B cell (primary cell): ENCODE measurements at regions of chr1 and their contacts with region 1.

Region 1: DNA sequence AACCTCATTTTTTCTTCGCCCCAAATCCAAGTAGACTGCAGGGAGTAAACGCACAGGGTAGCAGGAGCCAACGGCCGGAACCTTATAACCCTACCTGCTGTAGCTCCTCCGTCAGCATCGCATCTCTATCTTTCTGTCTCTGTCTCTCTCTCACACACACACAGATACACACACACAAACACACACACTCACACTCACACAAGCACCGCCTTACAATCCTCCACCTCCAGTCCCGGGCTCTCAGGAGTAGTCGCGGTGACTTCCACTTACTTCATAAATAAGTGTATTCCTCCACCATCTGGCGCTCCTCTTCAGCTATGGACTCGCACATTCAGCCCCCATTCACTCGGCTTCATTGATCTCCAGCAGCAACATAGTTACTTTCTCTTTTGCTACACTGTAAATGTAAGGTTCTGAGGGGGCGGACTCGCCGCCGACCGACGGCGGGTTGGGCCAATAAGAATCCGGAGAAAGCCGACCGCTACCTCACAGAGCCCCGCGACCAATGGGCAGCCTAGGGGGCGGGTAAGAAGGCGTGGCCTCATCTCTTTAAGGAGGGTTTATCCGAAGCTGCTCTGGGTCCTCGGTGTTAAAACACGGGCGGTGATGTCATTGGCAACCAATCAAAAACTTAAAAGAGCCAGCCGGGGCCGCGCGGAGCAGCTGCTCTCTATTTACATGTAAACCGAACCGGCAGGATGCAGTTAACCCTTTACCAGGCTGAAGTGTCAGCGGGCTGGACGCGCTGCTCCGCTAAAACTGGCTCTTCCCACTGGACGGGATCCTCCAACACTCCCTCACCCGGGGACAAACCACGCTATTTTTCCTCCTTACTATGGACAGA is at the start of gene DUSP10:
- DNase-seq: peak; percentile 100
- ATAC-seq: peak; percentile 78
- H3K4me3 ChIP-seq: peak within 1 kb of the TSS; percentile 85 to 94 (median 94)
- H3K4me3 Mint-ChIP-seq: no peak within 1 kb of the TSS
- H3K27ac ChIP-seq: peak within 1 kb of the TSS; percentile 99
- H3K27ac Mint-ChIP-seq: no peak within 1 kb of the TSS
- H3K4me1 ChIP-seq: peaks cover 28 to 42% of the 10 kb centered on the region in 2 donors
- H3K4me1 Mint-ChIP-seq: peaks cover 26% of the 10 kb centered on the region
- H3K27me3 ChIP-seq: no peaks in the 10 kb centered on the region
- H3K27me3 Mint-ChIP-seq: no peaks in the 10 kb centered on the region
- CTCF ChIP-seq: no peak
- total RNA-seq, gene DUSP10: 19.8 and 22.8 TPM in 2 replicates

Region 2: GRCh38 chr1:220983877-220984635 is 757.9 kb before region 1 on chr1:
- CTCF ChIA-PET with region 1: no interaction called
- POLR2A ChIA-PET with region 1: no interaction called
- intact Hi-C with region 1: no loop called
- DNase-seq: no peak
- ATAC-seq: no peak
- H3K4me3 ChIP-seq: no peak overlapping the region
- H3K4me3 Mint-ChIP-seq: no peak overlapping the region
- H3K27ac ChIP-seq: no peak overlapping the region
- H3K27ac Mint-ChIP-seq: no peak overlapping the region
- H3K4me1 ChIP-seq: no peaks in the 10 kb centered on the region
- H3K4me1 Mint-ChIP-seq: no peaks in the 10 kb centered on the region
- H3K27me3 ChIP-seq: no peaks in the 10 kb centered on the region
- H3K27me3 Mint-ChIP-seq: no peaks in the 10 kb centered on the region
- CTCF ChIP-seq: no peak

Region 3: DNA sequence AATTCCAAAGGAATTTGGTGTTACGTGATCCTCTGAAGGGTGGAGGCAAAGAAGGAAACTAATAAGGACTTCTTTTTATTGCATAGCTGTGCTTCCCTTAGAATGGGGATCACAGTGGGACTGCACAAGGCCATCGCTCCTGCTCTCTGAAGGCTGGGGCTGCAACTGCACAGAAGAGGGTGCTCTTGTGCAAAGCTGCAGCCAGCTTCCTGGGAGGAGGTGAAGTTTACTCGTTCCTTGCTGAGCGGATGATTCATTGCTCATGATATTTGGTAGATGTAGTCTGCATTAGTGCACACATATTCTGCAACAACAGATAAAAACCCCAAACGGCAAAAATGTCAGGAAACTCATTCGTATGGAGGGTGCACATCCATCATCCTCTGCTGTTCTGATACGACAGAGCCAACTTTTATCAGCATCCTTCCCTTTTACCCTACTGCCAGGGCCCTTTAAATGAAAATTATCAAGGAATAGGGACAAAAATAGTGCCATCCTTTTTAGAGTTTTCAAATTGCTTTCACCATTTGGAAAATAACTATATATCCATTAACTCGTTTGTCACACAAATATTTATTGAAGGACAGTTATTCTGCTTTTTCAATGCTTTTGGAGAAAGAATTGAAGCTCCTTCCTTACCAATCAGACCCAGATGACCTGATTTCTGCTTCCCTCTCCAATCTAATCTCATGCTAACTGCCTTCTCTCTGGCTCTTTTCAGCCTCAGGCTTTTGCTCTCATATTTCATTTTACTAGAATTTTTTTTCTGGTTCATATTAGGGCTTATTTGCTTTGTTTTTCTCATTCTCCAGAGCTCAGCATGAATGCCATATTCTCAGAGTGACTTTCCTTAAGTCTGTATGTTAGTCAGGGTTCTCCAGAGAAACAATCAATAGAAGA is 263.6 kb before region 1 on chr1:
- CTCF ChIA-PET with region 1: interaction called, 15 read pairs
- POLR2A ChIA-PET with region 1: interaction called, 3 read pairs
- intact Hi-C with region 1: no loop called
- DNase-seq: peak; percentile 55
- ATAC-seq: peak; percentile 85
- H3K4me3 ChIP-seq: no peak overlapping the region
- H3K4me3 Mint-ChIP-seq: no peak overlapping the region
- H3K27ac ChIP-seq: no peak overlapping the region
- H3K27ac Mint-ChIP-seq: no peak overlapping the region
- H3K4me1 ChIP-seq: peaks cover 0 to 3% of the 10 kb centered on the region in 2 donors
- H3K4me1 Mint-ChIP-seq: peaks cover 2% of the 10 kb centered on the region
- H3K27me3 ChIP-seq: no peaks in the 10 kb centered on the region
- H3K27me3 Mint-ChIP-seq: peaks cover 5% of the 10 kb centered on the region
- CTCF ChIP-seq: peak; percentile 62

Region 4: DNA sequence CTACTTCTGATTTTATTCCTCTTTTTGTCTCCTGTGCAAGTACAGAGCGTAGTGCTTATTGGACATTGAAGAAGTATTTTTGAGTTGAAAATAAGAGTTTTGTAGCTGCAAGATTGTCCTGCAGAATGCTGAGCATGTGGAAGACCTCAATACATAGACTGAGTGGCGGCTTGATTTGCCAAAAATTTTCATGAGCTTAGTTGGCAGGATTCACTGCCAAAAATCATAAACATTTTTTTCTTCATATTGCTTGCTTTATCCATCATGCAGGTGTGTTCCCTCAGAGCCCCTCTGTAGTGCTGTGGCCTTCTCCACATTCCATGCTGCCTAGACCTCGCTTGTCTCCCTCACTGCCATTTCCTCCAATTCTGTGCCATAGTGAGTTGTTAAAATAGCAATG is 100.1 kb before region 1 on chr1:
- CTCF ChIA-PET with region 1: no interaction called
- POLR2A ChIA-PET with region 1: no interaction called
- intact Hi-C with region 1: no loop called
- DNase-seq: no peak
- ATAC-seq: no peak
- H3K4me3 ChIP-seq: no peak overlapping the region
- H3K4me3 Mint-ChIP-seq: no peak overlapping the region
- H3K27ac ChIP-seq: no peak overlapping the region
- H3K27ac Mint-ChIP-seq: no peak overlapping the region
- H3K4me1 ChIP-seq: peaks cover 15 to 16% of the 10 kb centered on the region in 2 donors
- H3K4me1 Mint-ChIP-seq: peaks cover 11% of the 10 kb centered on the region
- H3K27me3 ChIP-seq: no peaks in the 10 kb centered on the region
- H3K27me3 Mint-ChIP-seq: no peaks in the 10 kb centered on the region
- CTCF ChIP-seq: no peak

Region 5: GRCh38 chr1:221725735-221726672 is 15.9 kb before region 1 on chr1:
- CTCF ChIA-PET with region 1: interaction called, 11 read pairs
- POLR2A ChIA-PET with region 1: interaction called, 13 read pairs
- intact Hi-C with region 1: no loop called
- DNase-seq: peak; percentile 53
- ATAC-seq: peak; percentile 33
- H3K4me3 ChIP-seq: peak overlapping the region in 2 of 5 experiments; percentile 3 to 11
- H3K4me3 Mint-ChIP-seq: peak overlapping the region; percentile 62
- H3K27ac ChIP-seq: no peak overlapping the region
- H3K27ac Mint-ChIP-seq: peak overlapping the region; percentile 39
- H3K4me1 ChIP-seq: peaks cover 26 to 31% of the 10 kb centered on the region in 2 donors
- H3K4me1 Mint-ChIP-seq: peaks cover 64% of the 10 kb centered on the region
- H3K27me3 ChIP-seq: no peaks in the 10 kb centered on the region
- H3K27me3 Mint-ChIP-seq: no peaks in the 10 kb centered on the region
- CTCF ChIP-seq: no peak

Region 6: DNA sequence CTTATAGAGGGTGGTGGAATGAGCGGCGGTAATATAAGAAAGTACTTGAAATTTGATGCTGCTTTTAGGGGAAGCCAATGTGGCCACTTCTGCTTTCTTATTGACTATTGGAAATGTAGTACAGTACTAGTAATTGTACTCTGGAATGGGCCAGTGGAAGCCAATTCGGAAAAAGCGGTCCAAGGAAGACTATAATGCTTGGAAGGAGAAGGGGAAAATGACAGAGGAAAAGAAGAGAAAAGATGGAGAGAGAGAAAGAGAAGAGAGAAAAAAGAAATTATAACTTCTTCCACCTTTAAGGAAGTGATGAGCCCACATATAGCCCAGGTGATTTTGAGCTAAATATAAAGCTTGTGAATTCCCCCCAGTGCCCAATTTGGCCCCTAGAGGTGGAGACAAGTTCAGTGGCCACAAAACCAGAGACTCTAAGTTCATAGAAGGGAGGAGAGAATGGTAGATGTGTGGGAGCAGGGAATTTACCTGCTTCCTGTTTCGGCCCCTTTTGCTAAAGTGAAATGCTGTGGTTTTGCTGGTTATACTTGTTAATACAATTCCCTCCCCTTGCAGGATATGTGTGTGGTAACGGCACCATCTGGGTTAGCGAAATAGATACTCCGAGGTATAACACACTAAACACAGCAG is 35.6 kb after region 1 on chr1:
- CTCF ChIA-PET with region 1: interaction called, 9 read pairs
- POLR2A ChIA-PET with region 1: interaction called, 23 read pairs
- intact Hi-C with region 1: loop called (anchors 1 kb)
- DNase-seq: peak; percentile 91
- ATAC-seq: peak; percentile 62
- H3K4me3 ChIP-seq: peak overlapping the region in 4 of 5 experiments; percentile 3 to 49 (median 26)
- H3K4me3 Mint-ChIP-seq: peak overlapping the region; percentile 79
- H3K27ac ChIP-seq: peak overlapping the region; percentile 80 to 88
- H3K27ac Mint-ChIP-seq: peak overlapping the region; percentile 91
- H3K4me1 ChIP-seq: peaks cover 54 to 64% of the 10 kb centered on the region in 2 donors
- H3K4me1 Mint-ChIP-seq: peaks cover 65% of the 10 kb centered on the region
- H3K27me3 ChIP-seq: no peaks in the 10 kb centered on the region
- H3K27me3 Mint-ChIP-seq: no peaks in the 10 kb centered on the region
- CTCF ChIP-seq: no peak

Region 7: GRCh38 chr1:221881805-221882581 is 140.1 kb after region 1 on chr1:
- CTCF ChIA-PET with region 1: no interaction called
- POLR2A ChIA-PET with region 1: interaction called, 9 read pairs
- intact Hi-C with region 1: loop called (anchors 5 kb)
- DNase-seq: no peak
- ATAC-seq: peak; percentile 80
- H3K4me3 ChIP-seq: no peak overlapping the region
- H3K4me3 Mint-ChIP-seq: peak overlapping the region; percentile 10
- H3K27ac ChIP-seq: no peak overlapping the region
- H3K27ac Mint-ChIP-seq: peak overlapping the region; percentile 66
- H3K4me1 ChIP-seq: no peaks in the 10 kb centered on the region
- H3K4me1 Mint-ChIP-seq: peaks cover 19% of the 10 kb centered on the region
- H3K27me3 ChIP-seq: no peaks in the 10 kb centered on the region
- H3K27me3 Mint-ChIP-seq: no peaks in the 10 kb centered on the region
- CTCF ChIP-seq: no peak

Region 8: GRCh38 chr1:221911714-221912113 is 169.8 kb after region 1 on chr1:
- CTCF ChIA-PET with region 1: no interaction called
- POLR2A ChIA-PET with region 1: no interaction called
- intact Hi-C with region 1: no loop called
- DNase-seq: peak; percentile 26
- ATAC-seq: no peak
- H3K4me3 ChIP-seq: no peak overlapping the region
- H3K4me3 Mint-ChIP-seq: no peak overlapping the region
- H3K27ac ChIP-seq: no peak overlapping the region
- H3K27ac Mint-ChIP-seq: no peak overlapping the region
- H3K4me1 ChIP-seq: peaks cover 5 to 10% of the 10 kb centered on the region in 2 donors
- H3K4me1 Mint-ChIP-seq: peaks cover 12% of the 10 kb centered on the region
- H3K27me3 ChIP-seq: no peaks in the 10 kb centered on the region
- H3K27me3 Mint-ChIP-seq: no peaks in the 10 kb centered on the region
- CTCF ChIP-seq: no peak

Region 9: GRCh38 chr1:221979461-221980032 is 237.6 kb after region 1 on chr1:
- CTCF ChIA-PET with region 1: interaction called, 11 read pairs
- POLR2A ChIA-PET with region 1: no interaction called
- intact Hi-C with region 1: loop called (anchors 1 kb)
- DNase-seq: peak; percentile 7
- ATAC-seq: no peak
- H3K4me3 ChIP-seq: no peak overlapping the region
- H3K4me3 Mint-ChIP-seq: no peak overlapping the region
- H3K27ac ChIP-seq: no peak overlapping the region
- H3K27ac Mint-ChIP-seq: no peak overlapping the region
- H3K4me1 ChIP-seq: no peaks in the 10 kb centered on the region
- H3K4me1 Mint-ChIP-seq: peaks cover 2% of the 10 kb centered on the region
- H3K27me3 ChIP-seq: no peaks in the 10 kb centered on the region
- H3K27me3 Mint-ChIP-seq: peaks cover 12% of the 10 kb centered on the region
- CTCF ChIP-seq: no peak